ENCODE measurements at regions of chr6 and their contacts with region 1.

Region 1: GRCh38 chr6:47787620-47788497 is 6.0 kb downstream of the OPN5 start:
- DNase-seq: peak; percentile 69 to 85
- H3K4me3 ChIP-seq: peak overlapping the region in 1 of 4 donors; percentile 13
- H3K27ac ChIP-seq: no peak overlapping the region
- H3K4me1 ChIP-seq: peaks cover 0 to 11% (median 5%) of the 10 kb centered on the region in 4 donors
- H3K27me3 ChIP-seq: peaks cover 0 to 17% (median 0%) of the 10 kb centered on the region in 3 donors
- CTCF ChIP-seq: peak in 5 of 7 experiments; percentile 67 to 86 (median 81)
- EP300 ChIP-seq: no peak
- POLR2A ChIP-seq: no peak

Region 2: GRCh38 chr6:47733879-47734558 is 53.8 kb before region 1 on chr6:
- intact Hi-C with region 1: no loop called
- DNase-seq: peak in 1 of 2 donors; percentile 44
- H3K4me3 ChIP-seq: no peak overlapping the region
- H3K27ac ChIP-seq: no peak overlapping the region
- H3K4me1 ChIP-seq: no peaks in the 10 kb centered on the region
- H3K27me3 ChIP-seq: no peaks in the 10 kb centered on the region
- CTCF ChIP-seq: peak in 4 of 7 experiments; percentile 23 to 51 (median 31)
- EP300 ChIP-seq: no peak
- POLR2A ChIP-seq: no peak

Region 3: DNA sequence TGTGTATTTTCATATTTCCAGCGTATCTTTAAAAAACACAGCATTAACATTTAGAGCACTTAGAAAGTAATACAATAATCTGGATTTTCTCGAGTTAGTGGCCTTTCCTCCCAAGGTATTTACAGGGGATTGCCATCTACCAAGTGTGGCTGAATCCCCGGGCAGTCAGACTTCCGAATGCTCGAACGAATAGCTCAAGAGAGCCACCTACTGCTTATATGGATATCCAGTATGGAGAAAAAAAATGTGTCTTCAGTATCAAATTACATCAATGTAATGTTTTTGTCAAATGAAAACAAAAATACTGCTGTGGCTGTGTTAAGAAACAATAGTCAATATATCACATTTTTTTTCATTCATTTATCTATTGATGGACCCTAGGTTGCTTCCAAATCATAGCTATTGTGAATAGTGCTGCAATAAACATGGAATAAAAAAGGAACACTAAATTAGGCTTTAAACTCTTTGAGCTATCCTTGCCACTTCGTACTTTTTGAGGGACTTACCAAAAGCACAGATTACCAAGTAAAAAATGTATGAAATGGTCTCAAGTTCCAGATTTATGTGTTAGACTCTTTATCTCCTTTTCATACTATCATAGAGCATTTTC is 977.6 kb after region 1 on chr6:
- intact Hi-C with region 1: loop called (anchors 10 kb)
- DNase-seq: peak; percentile 32 to 77
- H3K4me3 ChIP-seq: no peak overlapping the region
- H3K27ac ChIP-seq: peak overlapping the region in 2 of 5 donors; percentile 39 to 52
- H3K4me1 ChIP-seq: peaks cover 0 to 12% (median 3%) of the 10 kb centered on the region in 4 donors
- H3K27me3 ChIP-seq: no peaks in the 10 kb centered on the region
- CTCF ChIP-seq: peak in 4 of 7 experiments; percentile 22 to 47 (median 30)
- EP300 ChIP-seq: no peak
- POLR2A ChIP-seq: no peak